ENCODE measurements at regions of chr7 and their contacts with region 1.

Region 1: DNA sequence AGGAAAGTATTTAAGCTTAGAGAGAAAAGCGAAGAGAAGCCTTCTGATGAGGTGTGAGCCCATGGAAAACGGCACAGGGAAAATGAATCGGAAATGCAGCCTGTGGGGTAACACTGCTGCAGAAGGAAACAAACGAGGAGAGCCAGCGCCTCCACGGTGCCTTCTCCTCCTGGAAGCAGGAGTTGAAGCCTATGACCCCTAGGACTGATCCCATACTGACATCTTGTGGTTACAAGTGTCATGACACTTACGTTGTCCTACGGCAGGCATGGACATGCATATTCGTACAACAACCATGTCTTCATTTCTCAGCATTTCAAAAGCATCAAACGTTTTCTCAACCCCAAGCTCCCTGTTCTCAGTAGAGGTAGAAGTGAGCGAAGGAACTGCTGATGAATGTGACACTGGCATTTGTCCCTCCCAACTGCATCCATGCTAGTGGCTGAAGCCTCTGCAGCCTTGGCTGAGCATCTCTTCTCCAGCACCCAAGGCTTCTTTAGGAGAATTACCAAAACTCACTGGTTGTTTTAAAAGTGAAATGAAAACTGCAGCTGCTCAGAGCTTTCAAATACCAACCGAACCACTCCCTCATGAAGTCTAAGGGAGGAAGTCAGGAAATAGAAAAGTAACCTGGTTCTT is 160.2 kb downstream of the JAZF1 start:
- DNase-seq: peak; percentile 84
- H3K4me3 ChIP-seq: no peak overlapping the region; a peak in 1 of 4 replicates
- H3K27ac ChIP-seq: no peak overlapping the region
- H3K4me1 ChIP-seq: peaks cover 7 to 14% of the 10 kb centered on the region in 2 experiments; a peak in 2 of 4 replicates
- H3K27me3 ChIP-seq: no peaks in the 10 kb centered on the region
- CTCF ChIP-seq: peak; percentile 97
- EP300 ChIP-seq: no peak
- RAD21 ChIP-seq: peak; percentile 99

Region 2: GRCh38 chr7:27204851-27205337 is 815.5 kb before region 1 on chr7:
- CTCF ChIA-PET with region 1: interaction called, 37 read pairs
- POLR2A ChIA-PET with region 1: no interaction called
- DNase-seq: no peak
- H3K4me3 ChIP-seq: no peak overlapping the region; a peak in 1 of 4 replicates
- H3K27ac ChIP-seq: no peak overlapping the region
- H3K4me1 ChIP-seq: peaks cover 0 to 7% of the 10 kb centered on the region in 2 experiments; a peak in 1 of 4 replicates
- H3K27me3 ChIP-seq: peaks cover 95% of the 10 kb centered on the region
- CTCF ChIP-seq: no peak
- EP300 ChIP-seq: no peak
- RAD21 ChIP-seq: no peak

Region 3: DNA sequence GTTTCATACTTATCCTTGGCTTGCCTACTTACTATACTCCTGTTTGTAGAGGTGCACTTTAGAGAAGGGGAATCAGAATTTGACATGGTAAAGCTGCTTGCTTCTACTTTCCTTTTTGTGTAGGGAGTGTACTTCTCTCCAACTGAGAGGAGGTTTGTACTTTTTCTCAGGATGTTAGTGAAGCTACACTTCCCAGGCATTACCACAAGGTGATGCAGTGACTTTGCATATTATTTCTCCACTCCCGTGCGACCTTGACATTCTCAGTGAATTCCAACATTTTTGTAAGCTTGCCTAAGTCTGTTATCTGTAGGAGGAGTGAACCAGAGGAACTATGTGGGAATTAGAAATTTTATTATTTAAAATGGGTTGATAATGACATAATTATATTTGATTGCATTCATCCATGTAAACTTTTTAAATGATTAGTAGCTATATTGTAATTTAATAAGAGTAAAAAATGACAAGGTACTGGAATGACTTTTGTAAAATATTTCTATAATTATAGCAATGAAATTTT is 275.3 kb before region 1 on chr7:
- CTCF ChIA-PET with region 1: interaction called, 30 read pairs
- POLR2A ChIA-PET with region 1: no interaction called
- DNase-seq: peak; percentile 58
- H3K4me3 ChIP-seq: no peak overlapping the region; a peak in 1 of 4 replicates
- H3K27ac ChIP-seq: peak overlapping the region; percentile 29 to 65
- H3K4me1 ChIP-seq: peaks cover 15 to 29% of the 10 kb centered on the region in 2 experiments; a peak in 3 of 4 replicates
- H3K27me3 ChIP-seq: no peaks in the 10 kb centered on the region
- CTCF ChIP-seq: peak; percentile 89
- EP300 ChIP-seq: no peak
- RAD21 ChIP-seq: peak; percentile 87

Region 4: DNA sequence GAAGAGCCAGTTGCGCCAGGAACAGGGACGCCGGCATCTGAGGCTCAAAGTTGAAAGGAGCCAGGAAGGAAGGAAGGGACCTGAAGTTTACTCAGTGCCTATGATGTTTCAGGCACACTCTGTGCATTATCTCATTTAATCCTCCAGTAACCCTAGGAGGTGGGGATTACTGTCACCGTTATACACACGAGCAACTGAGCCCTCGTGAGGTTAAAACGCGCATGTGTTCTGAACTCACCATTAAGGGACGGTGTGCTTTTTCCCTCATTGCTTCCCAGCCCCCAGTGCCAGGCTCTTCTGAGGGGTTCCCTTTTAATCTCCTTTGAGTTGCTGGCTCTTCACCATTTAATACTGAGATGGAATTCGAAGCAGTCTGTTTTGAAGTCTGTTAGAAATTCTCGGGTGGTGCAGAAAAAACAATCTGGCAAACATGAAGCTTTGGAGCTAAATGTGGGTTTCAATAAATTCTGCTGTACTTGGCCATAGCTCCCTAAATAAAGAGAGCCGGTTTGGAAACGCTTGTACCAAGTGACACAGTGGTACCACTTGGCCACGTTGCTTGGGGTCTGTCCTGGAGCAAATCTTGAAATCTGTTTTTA is 178.2 kb before region 1 on chr7:
- CTCF ChIA-PET with region 1: no interaction called
- POLR2A ChIA-PET with region 1: no interaction called
- DNase-seq: peak; percentile 27
- H3K4me3 ChIP-seq: no peak overlapping the region
- H3K27ac ChIP-seq: no peak overlapping the region
- H3K4me1 ChIP-seq: no peaks in the 10 kb centered on the region
- H3K27me3 ChIP-seq: no peaks in the 10 kb centered on the region
- CTCF ChIP-seq: no peak
- EP300 ChIP-seq: no peak
- RAD21 ChIP-seq: no peak

Region 5: GRCh38 chr7:27940341-27940740 is 80.1 kb before region 1 on chr7:
- CTCF ChIA-PET with region 1: interaction called, 12 read pairs
- POLR2A ChIA-PET with region 1: no interaction called
- DNase-seq: no peak
- H3K4me3 ChIP-seq: no peak overlapping the region
- H3K27ac ChIP-seq: no peak overlapping the region
- H3K4me1 ChIP-seq: peaks cover 0 to 4% of the 10 kb centered on the region in 2 experiments; a peak in 1 of 4 replicates
- H3K27me3 ChIP-seq: no peaks in the 10 kb centered on the region
- CTCF ChIP-seq: no peak
- EP300 ChIP-seq: no peak
- RAD21 ChIP-seq: no peak

Region 6: GRCh38 chr7:28002638-28003037 is 17.8 kb before region 1 on chr7:
- CTCF ChIA-PET with region 1: interaction called, 44 read pairs
- POLR2A ChIA-PET with region 1: no interaction called
- DNase-seq: no peak
- H3K4me3 ChIP-seq: no peak overlapping the region
- H3K27ac ChIP-seq: no peak overlapping the region
- H3K4me1 ChIP-seq: peaks cover 0 to 6% of the 10 kb centered on the region in 2 experiments; a peak in 1 of 4 replicates
- H3K27me3 ChIP-seq: no peaks in the 10 kb centered on the region
- CTCF ChIP-seq: no peak
- EP300 ChIP-seq: no peak
- RAD21 ChIP-seq: no peak

Region 7: GRCh38 chr7:28062197-28062991 is 42.0 kb after region 1 on chr7:
- CTCF ChIA-PET with region 1: interaction called, 22 read pairs
- POLR2A ChIA-PET with region 1: no interaction called
- DNase-seq: peak; percentile 62
- H3K4me3 ChIP-seq: no peak overlapping the region
- H3K27ac ChIP-seq: no peak overlapping the region
- H3K4me1 ChIP-seq: peaks cover 0 to 8% of the 10 kb centered on the region in 2 experiments; a peak in 2 of 4 replicates
- H3K27me3 ChIP-seq: no peaks in the 10 kb centered on the region
- CTCF ChIP-seq: peak; percentile 88
- EP300 ChIP-seq: no peak
- RAD21 ChIP-seq: peak; percentile 92

Region 8: DNA sequence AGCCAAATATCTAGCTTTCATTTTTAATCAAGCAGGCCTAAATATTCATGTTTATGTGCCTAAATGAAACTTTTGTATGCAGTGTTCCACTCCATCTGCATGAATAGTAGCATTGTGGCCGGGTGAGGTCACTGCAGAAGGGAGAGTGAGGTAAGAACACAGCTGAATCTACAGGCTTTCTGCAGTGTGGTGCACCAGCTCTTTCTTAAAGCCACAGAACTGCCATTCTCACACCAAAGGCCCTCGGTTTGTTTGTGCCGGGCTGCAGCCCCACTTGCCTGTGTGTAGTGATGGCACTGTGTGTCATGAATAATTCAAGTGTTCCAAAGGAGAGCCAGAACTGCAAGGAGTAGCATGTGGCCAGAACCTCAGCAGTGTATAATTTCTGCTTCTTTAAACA is 733.6 kb after region 1 on chr7:
- CTCF ChIA-PET with region 1: no interaction called
- POLR2A ChIA-PET with region 1: no interaction called
- DNase-seq: no peak
- H3K4me3 ChIP-seq: no peak overlapping the region
- H3K27ac ChIP-seq: no peak overlapping the region
- H3K4me1 ChIP-seq: peaks cover 0 to 16% of the 10 kb centered on the region in 2 experiments; a peak in 3 of 4 replicates
- H3K27me3 ChIP-seq: no peaks in the 10 kb centered on the region
- CTCF ChIP-seq: peak; percentile 21; the same call in 1 of the 2 replicates
- EP300 ChIP-seq: no peak
- RAD21 ChIP-seq: no peak